Ascending aorta (tissue), 2 donors: ENCODE measurements at regions of chr9 and their contacts with region 1.

Region 1: DNA sequence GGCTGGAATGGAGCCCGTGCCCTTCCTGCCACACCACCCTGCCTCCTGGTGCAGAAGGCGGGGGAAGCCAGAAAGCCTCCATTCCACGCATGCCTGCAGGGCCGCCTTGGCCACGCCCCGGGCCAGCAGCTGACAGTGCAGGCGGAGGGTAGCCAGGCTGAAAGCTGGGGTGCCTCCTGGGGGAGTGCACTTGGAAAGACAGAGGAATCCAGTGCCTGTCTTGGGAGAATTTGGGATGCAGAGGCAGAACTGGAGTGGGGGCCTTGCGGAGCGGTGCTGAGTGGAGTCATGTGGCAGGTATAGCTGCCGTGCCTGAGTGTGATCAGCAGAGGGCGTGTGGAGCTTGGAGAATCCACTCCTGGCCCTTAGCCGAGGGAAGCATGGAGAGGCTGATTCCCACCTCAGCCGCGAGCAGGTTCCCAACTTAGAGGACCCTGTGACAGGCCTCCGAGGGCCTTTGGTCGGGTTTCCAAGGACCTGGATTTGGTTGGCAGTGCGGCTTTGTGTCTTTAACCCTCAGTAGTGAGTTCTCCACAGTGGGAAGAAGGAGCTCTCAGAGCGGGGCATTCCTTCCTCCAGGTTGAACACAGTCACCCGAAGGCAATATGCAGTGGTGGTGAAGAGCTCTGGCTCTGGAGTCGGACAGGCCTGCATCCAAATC is 9.1 kb upstream of the URM1 start:
- DNase-seq: peak; percentile 39 to 90
- H3K4me3 ChIP-seq: peak overlapping the region; percentile 47 to 61
- H3K27ac ChIP-seq: peak overlapping the region; percentile 46 to 58
- H3K4me1 ChIP-seq: peaks cover 4 to 19% of the 10 kb centered on the region in 2 donors
- H3K27me3 ChIP-seq: no peaks in the 10 kb centered on the region
- CTCF ChIP-seq: peak; percentile 83 to 92 (median 88)

Region 2: DNA sequence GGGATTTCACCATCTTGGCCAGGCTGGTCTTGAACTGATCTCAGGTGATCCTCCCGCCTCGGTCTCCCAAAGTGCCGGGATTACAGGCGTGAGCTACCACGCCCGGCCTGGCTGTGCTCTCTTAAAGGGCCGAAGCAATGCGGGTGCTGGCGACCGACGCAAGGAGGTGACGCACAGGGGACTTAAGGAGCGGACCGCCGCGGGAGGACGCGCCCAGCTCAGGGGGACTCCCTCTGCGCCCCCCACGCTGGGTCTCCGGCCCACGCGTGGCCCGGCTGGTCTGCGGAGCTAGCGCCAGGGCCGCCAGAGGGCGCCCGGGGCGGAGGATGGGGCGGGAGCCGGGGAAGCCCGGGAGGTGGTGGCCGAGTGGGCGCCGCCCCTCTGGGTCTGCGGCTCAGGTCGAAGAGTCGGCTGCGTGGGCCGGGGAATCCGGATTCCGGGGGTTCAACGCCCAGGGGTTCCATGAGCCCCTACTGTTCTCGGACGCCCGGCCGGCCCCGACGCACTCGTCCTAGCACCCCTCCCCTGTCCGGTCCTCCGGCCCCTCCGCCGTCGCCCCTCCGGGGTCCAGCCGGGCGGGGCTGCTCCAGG is 58.0 kb after region 1 on chr9:
- intact Hi-C with region 1: loop called (anchors 2 kb)
- DNase-seq: peak in 1 of 2 donors; percentile 85
- H3K4me3 ChIP-seq: peak overlapping the region; percentile 89 to 93
- H3K27ac ChIP-seq: peak overlapping the region; percentile 82
- H3K4me1 ChIP-seq: peaks cover 0 to 17% of the 10 kb centered on the region in 2 donors
- H3K27me3 ChIP-seq: no peaks in the 10 kb centered on the region
- CTCF ChIP-seq: peak; percentile 81 to 90 (median 84)